ENCODE measurements at regions of chr9 and their contacts with region 1.

Region 1: GRCh38 chr9:96777426-96777864 is 442 bp downstream of the ZNF510 start:
- DNase-seq: peak in 1 of 10 donors; percentile 38
- H3K4me3 ChIP-seq: peak overlapping the region; percentile 68 to 100 (median 92)
- H3K27ac ChIP-seq: peak overlapping the region in 57 of 59 donors; percentile 6 to 93 (median 87)
- H3K27me3 ChIP-seq: no peaks in the 10 kb centered on the region
- CTCF ChIP-seq: no peak

Region 2: DNA sequence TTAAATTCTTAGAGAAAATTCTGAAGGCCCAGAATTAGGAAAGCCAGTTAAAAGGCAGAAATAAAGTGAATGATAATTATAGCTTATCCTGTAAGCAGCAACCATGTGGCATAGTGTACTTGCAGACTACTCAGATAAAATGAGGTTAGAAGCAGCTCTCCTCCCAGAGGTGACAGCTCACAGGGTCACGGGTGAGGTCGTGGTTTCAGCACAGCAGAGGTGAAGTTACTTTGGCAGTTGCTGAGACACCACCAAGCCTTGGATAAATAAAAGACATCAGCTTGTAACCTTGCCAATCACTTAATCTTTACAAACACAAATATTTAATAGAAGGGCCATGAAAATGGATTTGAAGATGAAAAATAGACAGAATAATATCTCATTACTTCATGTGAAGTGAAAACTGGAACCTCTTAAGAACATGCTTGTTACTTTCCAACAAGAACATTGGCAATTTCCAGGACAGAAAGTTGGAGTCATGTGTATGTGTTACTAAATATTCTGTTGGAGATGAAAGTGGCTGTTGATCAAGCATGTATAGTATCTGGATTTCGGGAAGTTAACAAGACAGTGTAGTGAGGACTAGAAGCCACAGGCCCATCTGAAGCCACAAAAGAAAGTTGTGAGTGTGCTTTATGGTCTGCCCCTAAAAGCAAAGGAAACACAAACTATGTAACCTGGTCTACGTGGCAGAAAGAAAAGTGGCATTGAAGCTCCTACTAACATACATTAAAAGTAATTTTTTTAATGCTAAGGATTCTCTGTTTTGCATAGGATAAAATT is 767.6 kb before region 1 on chr9:
- intact Hi-C with region 1: no loop called
- DNase-seq: no peak
- H3K4me3 ChIP-seq: no peak overlapping the region
- H3K27ac ChIP-seq: no peak overlapping the region
- H3K27me3 ChIP-seq: no peaks in the 10 kb centered on the region
- CTCF ChIP-seq: no peak

Region 3: GRCh38 chr9:96686548-96687335 is 90.7 kb before region 1 on chr9:
- intact Hi-C with region 1: loop called in 1 of 2 experiments (anchors 5 kb)
- DNase-seq: peak; percentile 59 to 89 (median 82)
- H3K4me3 ChIP-seq: peak overlapping the region; percentile 31 to 84 (median 69)
- H3K27ac ChIP-seq: peak overlapping the region in 51 of 59 donors; percentile 10 to 87 (median 71)
- H3K27me3 ChIP-seq: no peaks in the 10 kb centered on the region
- CTCF ChIP-seq: peak in 55 of 56 donors; percentile 28 to 77 (median 57)

Region 4: GRCh38 chr9:96818535-96818934 is 41.1 kb after region 1 on chr9:
- intact Hi-C with region 1: no loop called
- DNase-seq: no peak
- H3K4me3 ChIP-seq: no peak overlapping the region
- H3K27ac ChIP-seq: no peak overlapping the region
- H3K27me3 ChIP-seq: no peaks in the 10 kb centered on the region
- CTCF ChIP-seq: no peak

Region 5: DNA sequence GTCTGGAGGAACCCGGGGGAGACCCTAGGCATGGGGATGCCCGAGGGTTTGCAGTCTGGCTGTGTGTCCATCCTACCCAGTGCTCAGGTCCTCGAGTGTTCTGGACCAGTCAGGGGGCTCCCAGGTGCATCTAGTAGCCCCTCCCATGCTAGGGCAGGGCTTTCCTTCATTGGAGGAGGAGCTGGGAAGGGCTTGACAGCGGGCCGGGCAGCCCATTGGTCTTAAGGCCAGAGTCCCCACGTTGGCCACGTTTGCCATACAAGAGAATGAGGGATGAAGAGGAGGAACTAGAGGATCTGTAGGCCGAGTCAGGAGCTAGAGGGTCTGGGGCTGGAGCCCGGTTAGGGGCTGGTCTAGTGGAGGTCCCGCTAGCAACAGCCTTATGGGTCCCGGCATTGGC is 298.8 kb after region 1 on chr9:
- intact Hi-C with region 1: no loop called
- DNase-seq: no peak
- H3K4me3 ChIP-seq: peak overlapping the region in 1 of 59 donors; percentile 34
- H3K27ac ChIP-seq: no peak overlapping the region
- H3K27me3 ChIP-seq: peaks cover 0 to 28% (median 8%) of the 10 kb centered on the region in 45 donors
- CTCF ChIP-seq: no peak

Measured in dorsolateral prefrontal cortex (tissue), 120 donors.